ENCODE measurements at regions of chr19 and their contacts with region 1.

Region 1: DNA sequence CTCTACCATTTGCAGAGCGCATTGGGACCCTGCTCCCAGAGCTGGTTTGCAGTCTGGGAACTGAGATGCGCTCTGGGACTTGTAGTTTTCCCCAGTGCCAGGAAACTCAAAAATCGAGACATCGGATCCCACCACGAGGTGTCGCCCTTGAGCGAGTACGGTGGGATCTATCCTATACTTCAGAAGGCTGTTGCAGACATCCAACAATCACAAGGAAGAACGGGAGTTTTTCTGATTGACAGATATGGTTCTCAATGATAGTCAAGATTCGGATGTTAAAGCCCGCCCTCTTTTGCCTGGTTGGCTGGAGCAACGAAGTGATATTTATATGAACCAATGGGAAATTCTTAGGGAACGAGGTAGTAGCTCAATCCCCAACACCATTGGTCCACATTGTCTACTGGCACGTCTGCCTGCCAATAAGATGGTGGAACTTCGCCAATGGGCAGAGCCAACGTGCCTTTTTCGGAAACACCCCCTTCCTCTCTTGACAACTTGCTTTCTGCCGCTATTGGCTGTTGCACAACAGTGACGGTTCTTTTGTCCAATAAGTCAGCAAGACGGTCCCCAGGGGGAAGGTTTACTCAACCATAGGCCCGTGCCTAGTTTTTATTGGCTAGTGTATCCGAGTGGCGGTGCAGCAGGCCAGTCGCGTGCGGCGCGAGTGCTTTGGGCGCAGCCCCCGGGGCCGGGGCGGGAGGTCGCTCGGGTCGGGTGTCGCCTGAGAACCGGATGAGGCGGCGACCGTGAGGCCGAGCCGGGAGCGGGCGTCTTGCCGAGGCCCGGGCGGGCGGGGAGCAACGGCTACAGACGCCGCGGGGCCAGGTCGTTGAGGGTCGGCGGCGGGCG is at the start of gene DNM2:
- DNase-seq: peak; percentile 100
- H3K4me3 ChIP-seq: peak within 1 kb of the TSS; percentile 53
- H3K27me3 ChIP-seq: no peaks in the 10 kb centered on the region
- CTCF ChIP-seq: peak; percentile 80
- polyA plus RNA-seq, gene DNM2: 43.5 and 64.2 TPM in 2 replicates

Region 2: DNA sequence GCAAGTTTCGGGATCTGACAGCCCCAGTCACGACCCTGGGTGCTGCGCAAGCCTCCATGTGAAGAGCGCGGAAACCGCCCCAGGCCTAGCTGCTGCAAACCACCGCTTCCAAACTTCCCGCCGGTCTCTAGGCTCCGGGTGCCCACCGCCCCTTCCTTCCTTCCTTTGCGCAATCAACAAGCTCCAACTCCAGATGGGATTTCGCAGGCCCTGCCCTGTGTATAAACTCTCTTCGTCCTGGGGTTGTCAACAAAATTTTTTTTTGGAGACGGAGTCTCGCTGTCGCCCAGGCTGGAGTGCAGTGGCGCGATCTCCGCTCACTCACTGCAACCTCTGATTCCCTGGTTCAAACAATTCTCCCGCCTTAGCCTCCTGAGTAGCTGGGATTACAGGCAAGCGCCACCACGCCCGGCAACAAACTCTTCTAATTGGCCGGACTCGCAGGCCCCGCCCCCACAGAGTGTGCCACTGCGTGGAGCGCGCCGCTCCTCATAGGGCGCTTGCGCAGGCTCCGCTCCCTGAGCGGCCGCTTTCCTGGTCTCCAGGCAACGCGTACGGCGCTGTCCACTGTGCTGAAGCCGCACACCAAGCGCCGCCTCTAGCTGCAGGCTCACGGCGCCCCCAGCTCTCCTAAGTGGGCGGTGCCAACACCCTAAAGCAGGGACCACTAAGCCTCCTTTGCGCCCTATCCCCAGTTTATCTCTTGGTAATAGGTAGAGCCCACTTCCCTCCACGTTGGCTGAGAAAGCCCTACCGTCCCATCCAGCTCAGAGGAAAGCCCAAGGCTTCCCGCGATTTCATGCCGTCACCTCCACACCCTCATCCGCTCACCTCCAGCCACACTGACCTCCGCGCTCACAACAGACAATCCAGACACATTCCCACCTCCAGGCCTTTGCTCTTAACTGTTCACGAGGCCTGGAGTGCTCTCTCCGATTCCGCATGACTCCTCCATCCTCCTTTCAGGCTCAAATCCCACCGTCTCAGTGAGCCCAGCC is 21.9 kb before region 1 on chr19:
- CTCF ChIA-PET with region 1: interaction called, 39 read pairs
- POLR2A ChIA-PET with region 1: no interaction called
- DNase-seq: peak; percentile 69
- H3K4me3 ChIP-seq: no peak overlapping the region
- H3K27me3 ChIP-seq: no peaks in the 10 kb centered on the region
- CTCF ChIP-seq: no peak

Region 3: GRCh38 chr19:10730923-10731322 is 13.3 kb after region 1 on chr19:
- CTCF ChIA-PET with region 1: interaction called, 17 read pairs
- POLR2A ChIA-PET with region 1: no interaction called
- DNase-seq: no peak
- H3K4me3 ChIP-seq: no peak overlapping the region
- H3K27me3 ChIP-seq: no peaks in the 10 kb centered on the region
- CTCF ChIP-seq: no peak

Region 4: DNA sequence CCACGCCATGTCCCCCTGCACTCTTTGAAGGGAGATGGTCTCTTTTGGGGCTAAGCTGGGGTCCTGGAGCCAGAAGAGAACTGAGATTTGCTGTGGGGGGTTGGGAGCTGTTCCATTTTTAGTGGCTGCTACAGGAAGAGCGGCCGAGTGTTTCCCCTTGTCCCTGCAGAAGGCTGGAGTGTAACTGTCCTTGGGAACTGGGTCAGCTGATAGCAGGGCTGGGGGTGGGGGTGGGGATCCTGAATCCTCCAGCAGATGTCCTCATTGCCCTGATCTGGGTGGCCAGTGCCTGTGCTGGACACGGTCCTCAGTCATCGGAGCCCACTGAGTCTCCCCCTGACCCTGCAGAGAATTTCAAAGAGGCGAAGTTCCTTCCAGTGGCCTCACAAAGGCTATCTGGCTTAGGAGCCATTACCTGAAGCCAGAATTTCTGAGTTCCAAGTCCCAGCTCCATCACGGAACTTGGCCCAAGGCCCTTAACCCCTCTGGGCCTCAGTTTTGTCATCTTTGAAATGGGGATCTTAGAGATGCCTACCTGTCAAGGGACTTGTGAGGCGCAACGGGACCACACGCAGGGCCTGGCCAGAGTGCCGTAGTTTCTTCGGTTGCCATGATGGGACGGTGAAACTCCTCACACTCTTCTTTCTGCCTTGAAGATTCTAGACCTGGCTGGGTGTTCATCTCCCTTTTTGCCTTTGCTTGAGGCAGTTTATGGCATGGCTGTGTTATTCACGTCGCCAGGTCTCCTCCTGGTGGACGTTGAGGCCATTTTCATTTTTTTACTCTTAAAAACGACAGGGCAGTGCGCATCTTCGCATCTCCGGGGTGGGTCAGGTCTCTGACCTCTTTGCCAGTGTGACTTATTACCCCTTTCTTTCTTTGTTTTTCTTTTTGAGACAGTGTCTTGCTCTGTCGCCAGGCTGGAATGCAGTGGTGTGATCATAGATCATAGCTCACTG is 52.2 kb after region 1 on chr19:
- CTCF ChIA-PET with region 1: interaction called, 27 read pairs
- POLR2A ChIA-PET with region 1: no interaction called
- DNase-seq: no peak
- H3K4me3 ChIP-seq: no peak overlapping the region
- H3K27me3 ChIP-seq: no peaks in the 10 kb centered on the region
- CTCF ChIP-seq: peak; percentile 32

Region 5: GRCh38 chr19:10835754-10836477 is 118.3 kb after region 1 on chr19 and contains the start of gene TMED1:
- CTCF ChIA-PET with region 1: interaction called, 11 read pairs
- POLR2A ChIA-PET with region 1: interaction called, 3 read pairs
- DNase-seq: peak; percentile 94
- H3K4me3 ChIP-seq: peak within 1 kb of the TSS; percentile 66
- H3K27me3 ChIP-seq: no peaks in the 10 kb centered on the region
- CTCF ChIP-seq: peak; percentile 17; the same call in 1 of the 2 replicates
- polyA plus RNA-seq, gene TMED1: 50.2 and 85.3 TPM in 2 replicates

Region 6: GRCh38 chr19:10858204-10858828 is 140.7 kb after region 1 on chr19:
- CTCF ChIA-PET with region 1: interaction called, 121 read pairs
- POLR2A ChIA-PET with region 1: no interaction called
- DNase-seq: no peak
- H3K4me3 ChIP-seq: no peak overlapping the region
- H3K27me3 ChIP-seq: no peaks in the 10 kb centered on the region
- CTCF ChIP-seq: peak; percentile 82